Activated T-helper 2 cell treated with anti-CD3 and anti-CD28 coated beads, Interferon-gamma antibody, Interleukin-2, Interleukin-4, amounts not matched to agents 10 μg/mL and 5 μg/mL and 100 μg/mL, durations not matched to agents 14 hours and 24 hours and 36 hours (primary cell): ENCODE measurements at regions of chr5 and their contacts with region 1.

Region 1: DNA sequence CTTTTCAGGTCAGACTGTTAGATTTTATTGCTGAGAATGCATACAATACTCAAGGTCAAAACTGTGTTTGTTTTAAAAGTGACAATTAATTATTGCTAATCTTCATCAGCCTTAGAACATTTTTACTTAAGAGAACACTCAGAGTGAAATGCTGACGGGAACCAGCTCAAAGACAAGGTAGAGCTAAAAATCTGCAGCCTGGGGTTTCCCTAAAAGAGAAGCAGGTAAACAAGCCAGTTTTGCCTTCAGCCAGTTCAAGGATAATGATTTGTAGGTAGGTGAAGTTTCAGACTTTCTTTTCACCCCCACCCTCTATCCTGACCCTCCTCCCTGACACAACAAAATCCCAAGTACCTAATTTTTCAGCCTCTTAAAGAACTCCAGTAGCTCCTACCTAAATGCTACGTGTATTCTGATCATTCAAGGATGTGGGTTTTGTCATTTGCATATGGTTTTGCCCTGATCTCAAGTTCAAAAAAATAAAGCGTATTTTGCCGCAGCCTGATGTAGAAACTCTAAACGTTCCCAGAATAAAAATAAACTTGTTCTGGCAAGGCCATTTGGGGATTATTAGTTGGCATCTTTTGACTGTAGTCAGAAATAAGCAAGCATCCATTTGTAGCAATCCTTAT is 407.2 kb downstream of the EFNA5 start:
- DNase-seq: no peak
- H3K4me3 Mint-ChIP-seq: no peak overlapping the region
- H3K27ac Mint-ChIP-seq: peak overlapping the region; percentile 21
- H3K4me1 Mint-ChIP-seq: peaks cover 5% of the 10 kb centered on the region
- H3K27me3 Mint-ChIP-seq: no peaks in the 10 kb centered on the region

Region 2: DNA sequence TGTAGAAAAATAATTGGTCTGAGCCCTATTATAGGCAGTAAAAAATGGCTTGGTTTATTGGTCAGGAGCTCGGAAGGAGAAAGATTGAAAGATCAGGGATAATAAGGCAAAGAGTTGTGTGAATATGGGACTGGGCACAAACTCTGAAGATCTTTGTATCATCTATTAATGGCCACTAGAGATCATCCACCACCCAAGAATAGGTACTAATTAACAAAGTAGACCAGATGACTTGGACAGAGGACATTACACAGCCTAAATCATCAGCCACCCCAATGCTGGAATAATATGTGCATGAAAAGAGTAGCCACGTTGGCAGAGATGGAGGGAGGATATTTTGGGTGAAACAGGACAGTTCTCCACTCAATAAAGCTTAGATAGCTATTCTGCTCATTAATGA is 43.1 kb after region 1 on chr5:
- intact Hi-C with region 1: loop called (anchors 5 kb)
- DNase-seq: no peak
- H3K4me3 Mint-ChIP-seq: no peak overlapping the region
- H3K27ac Mint-ChIP-seq: no peak overlapping the region
- H3K4me1 Mint-ChIP-seq: peaks cover 11% of the 10 kb centered on the region
- H3K27me3 Mint-ChIP-seq: peaks cover 12% of the 10 kb centered on the region